CD4-positive, alpha-beta T cell (primary cell): ENCODE measurements at regions of chr19 and their contacts with region 1.

Region 1: GRCh38 chr19:12639901-12640613 is 26.5 kb downstream of the MAN2B1 start:
- DNase-seq: peak; percentile 72 to 92 (median 80)
- ATAC-seq: peak; percentile 72
- H3K4me3 ChIP-seq: peak overlapping the region; percentile 22
- H3K4me3 Mint-ChIP-seq: peak overlapping the region; percentile 55
- H3K27ac ChIP-seq: no peak overlapping the region
- H3K27ac Mint-ChIP-seq: peak overlapping the region; percentile 71
- H3K4me1 ChIP-seq: peaks cover 16% of the 10 kb centered on the region
- H3K4me1 Mint-ChIP-seq: peaks cover 22% of the 10 kb centered on the region
- H3K27me3 ChIP-seq: no peaks in the 10 kb centered on the region
- H3K27me3 Mint-ChIP-seq: no peaks in the 10 kb centered on the region
- CTCF ChIP-seq: peak; percentile 97

Region 2: GRCh38 chr19:12610540-12611360 is 29.3 kb before region 1 on chr19 and contains the starts of genes ZNF490 and ZNF791:
- CTCF ChIA-PET with region 1: interaction called, 28 read pairs
- POLR2A ChIA-PET with region 1: interaction called, 8 read pairs
- intact Hi-C with region 1: loop called (anchors 1 to 2 kb)
- DNase-seq: peak; percentile 92 to 99 (median 96)
- ATAC-seq: peak; percentile 76
- H3K4me3 ChIP-seq: peak within 1 kb of the TSS; percentile 99
- H3K4me3 Mint-ChIP-seq: peak within 1 kb of the TSS; percentile 100
- H3K27ac ChIP-seq: peak within 1 kb of the TSS; percentile 85 to 88
- H3K27ac Mint-ChIP-seq: peak within 1 kb of the TSS; percentile 100
- H3K4me1 ChIP-seq: peaks cover 45% of the 10 kb centered on the region
- H3K4me1 Mint-ChIP-seq: peaks cover 40% of the 10 kb centered on the region
- H3K27me3 ChIP-seq: no peaks in the 10 kb centered on the region
- H3K27me3 Mint-ChIP-seq: no peaks in the 10 kb centered on the region
- CTCF ChIP-seq: no peak
- total RNA-seq, gene ZNF490: 6.2 to 7.1 TPM
- total RNA-seq, gene ZNF791: 102 to 103 TPM

Region 3: GRCh38 chr19:12672744-12673143 is 32.7 kb after region 1 on chr19:
- CTCF ChIA-PET with region 1: interaction called, 16 read pairs
- POLR2A ChIA-PET with region 1: interaction called, 5 read pairs
- intact Hi-C with region 1: loop called (anchors 2 kb)
- DNase-seq: peak in 1 of 14 experiments; percentile 35
- ATAC-seq: no peak
- H3K4me3 ChIP-seq: no peak overlapping the region
- H3K4me3 Mint-ChIP-seq: peak overlapping the region; percentile 47
- H3K27ac ChIP-seq: no peak overlapping the region
- H3K27ac Mint-ChIP-seq: no peak overlapping the region
- H3K4me1 ChIP-seq: peaks cover 44% of the 10 kb centered on the region
- H3K4me1 Mint-ChIP-seq: peaks cover 31% of the 10 kb centered on the region
- H3K27me3 ChIP-seq: no peaks in the 10 kb centered on the region
- H3K27me3 Mint-ChIP-seq: no peaks in the 10 kb centered on the region
- CTCF ChIP-seq: no peak

Region 4: GRCh38 chr19:12782229-12783028 is 142.4 kb after region 1 on chr19:
- CTCF ChIA-PET with region 1: no interaction called
- POLR2A ChIA-PET with region 1: no interaction called
- intact Hi-C with region 1: no loop called
- DNase-seq: peak; percentile 89 to 99 (median 94)
- ATAC-seq: peak; percentile 75
- H3K4me3 ChIP-seq: peak overlapping the region; percentile 61
- H3K4me3 Mint-ChIP-seq: peak overlapping the region; percentile 92
- H3K27ac ChIP-seq: peak overlapping the region; percentile 91 to 98
- H3K27ac Mint-ChIP-seq: no peak overlapping the region
- H3K4me1 ChIP-seq: peaks cover 85% of the 10 kb centered on the region
- H3K4me1 Mint-ChIP-seq: peaks cover 41% of the 10 kb centered on the region
- H3K27me3 ChIP-seq: no peaks in the 10 kb centered on the region
- H3K27me3 Mint-ChIP-seq: no peaks in the 10 kb centered on the region
- CTCF ChIP-seq: no peak